ENCODE measurements at regions of chr11 and their contacts with region 1.

Region 1: GRCh38 chr11:62787005-62787759 is at the start of gene TMEM179B:
- DNase-seq: peak; percentile 98
- H3K4me3 ChIP-seq: peak within 1 kb of the TSS; percentile 60
- H3K27ac ChIP-seq: peak within 1 kb of the TSS; percentile 74
- H3K4me1 ChIP-seq: peaks cover 32% of the 10 kb centered on the region
- H3K27me3 ChIP-seq: no peaks in the 10 kb centered on the region
- CTCF ChIP-seq: peak; percentile 29
- total RNA-seq, gene TMEM179B: 45.5 and 48.3 TPM in 2 replicates

Region 2: GRCh38 chr11:62461740-62462507 is 325.3 kb before region 1 on chr11:
- CTCF ChIA-PET with region 1: no interaction called
- POLR2A ChIA-PET with region 1: interaction called, 30 read pairs
- intact Hi-C with region 1: no loop called
- DNase-seq: no peak
- H3K4me3 ChIP-seq: no peak overlapping the region
- H3K27ac ChIP-seq: no peak overlapping the region
- H3K4me1 ChIP-seq: peaks cover 22% of the 10 kb centered on the region
- H3K27me3 ChIP-seq: no peaks in the 10 kb centered on the region
- CTCF ChIP-seq: no peak

Region 3: DNA sequence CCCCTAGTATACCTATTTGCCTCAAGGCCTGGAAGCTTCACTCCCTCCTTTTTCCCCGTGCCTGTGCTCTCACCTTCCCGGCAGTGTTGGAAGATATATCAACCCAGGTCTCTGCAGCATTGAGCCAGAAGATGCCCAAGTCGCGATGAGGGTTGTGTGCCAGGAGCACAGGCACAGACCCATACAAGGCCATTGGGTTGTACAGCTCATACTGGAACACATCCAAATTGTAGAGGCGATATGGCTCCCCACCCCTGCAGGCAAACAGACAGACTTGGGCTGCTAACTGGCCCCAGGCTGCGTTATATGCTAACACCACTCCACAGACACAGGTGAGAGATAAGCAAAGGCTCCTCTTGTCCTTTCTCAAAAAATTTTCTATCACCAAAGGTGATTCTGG is 154.7 kb before region 1 on chr11:
- CTCF ChIA-PET with region 1: no interaction called
- POLR2A ChIA-PET with region 1: interaction called, 12 read pairs
- intact Hi-C with region 1: no loop called
- DNase-seq: no peak
- H3K4me3 ChIP-seq: no peak overlapping the region
- H3K27ac ChIP-seq: no peak overlapping the region
- H3K4me1 ChIP-seq: no peaks in the 10 kb centered on the region
- H3K27me3 ChIP-seq: no peaks in the 10 kb centered on the region
- CTCF ChIP-seq: no peak

Region 4: DNA sequence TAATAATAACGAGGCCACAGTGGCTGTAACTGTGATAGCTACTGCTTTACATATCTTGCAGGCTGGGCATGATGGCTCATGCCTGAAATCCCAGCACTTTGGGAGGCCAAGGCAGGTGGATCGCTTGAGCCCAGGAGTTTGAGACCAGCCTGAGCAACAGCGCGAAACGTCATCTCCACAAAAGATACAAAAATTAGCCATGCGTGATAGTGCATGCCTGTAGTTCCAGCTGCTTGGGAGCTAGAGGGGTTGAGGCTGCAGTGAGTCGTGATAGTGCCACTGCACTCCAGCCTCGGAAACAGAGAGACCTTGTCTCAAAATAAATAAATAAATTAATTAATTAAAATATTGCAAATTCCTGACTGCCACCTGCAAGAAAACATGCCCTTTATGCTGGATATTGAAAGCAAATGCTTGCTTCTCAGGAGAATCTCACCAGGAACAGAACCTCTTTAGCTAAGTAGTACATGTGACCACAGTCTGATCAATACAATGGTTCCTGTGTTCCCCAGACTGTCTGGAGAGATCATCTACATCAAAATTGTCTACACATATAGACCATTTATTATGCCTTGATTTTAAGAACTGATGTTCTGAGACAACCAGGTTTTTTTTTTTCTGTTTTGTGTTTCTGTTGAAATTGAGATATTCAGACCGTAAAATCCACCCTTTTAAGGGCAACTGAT is 39.6 kb before region 1 on chr11:
- CTCF ChIA-PET with region 1: no interaction called
- POLR2A ChIA-PET with region 1: no interaction called
- intact Hi-C with region 1: no loop called
- DNase-seq: no peak
- H3K4me3 ChIP-seq: no peak overlapping the region
- H3K27ac ChIP-seq: peak overlapping the region; percentile 38
- H3K4me1 ChIP-seq: peaks cover 3% of the 10 kb centered on the region; the same call in 1 of the 2 replicates
- H3K27me3 ChIP-seq: no peaks in the 10 kb centered on the region
- CTCF ChIP-seq: no peak

Region 5: GRCh38 chr11:62805076-62805892 is 18.1 kb after region 1 on chr11 and contains the start of gene NXF1:
- CTCF ChIA-PET with region 1: no interaction called
- POLR2A ChIA-PET with region 1: no interaction called
- intact Hi-C with region 1: loop called (anchors 2 kb)
- DNase-seq: peak; percentile 87 to 98
- H3K4me3 ChIP-seq: peak within 1 kb of the TSS; percentile 94
- H3K27ac ChIP-seq: peak within 1 kb of the TSS; percentile 16
- H3K4me1 ChIP-seq: peaks cover 20% of the 10 kb centered on the region
- H3K27me3 ChIP-seq: no peaks in the 10 kb centered on the region
- CTCF ChIP-seq: no peak
- total RNA-seq, gene NXF1: 45.6 and 56.1 TPM in 2 replicates

Region 6: DNA sequence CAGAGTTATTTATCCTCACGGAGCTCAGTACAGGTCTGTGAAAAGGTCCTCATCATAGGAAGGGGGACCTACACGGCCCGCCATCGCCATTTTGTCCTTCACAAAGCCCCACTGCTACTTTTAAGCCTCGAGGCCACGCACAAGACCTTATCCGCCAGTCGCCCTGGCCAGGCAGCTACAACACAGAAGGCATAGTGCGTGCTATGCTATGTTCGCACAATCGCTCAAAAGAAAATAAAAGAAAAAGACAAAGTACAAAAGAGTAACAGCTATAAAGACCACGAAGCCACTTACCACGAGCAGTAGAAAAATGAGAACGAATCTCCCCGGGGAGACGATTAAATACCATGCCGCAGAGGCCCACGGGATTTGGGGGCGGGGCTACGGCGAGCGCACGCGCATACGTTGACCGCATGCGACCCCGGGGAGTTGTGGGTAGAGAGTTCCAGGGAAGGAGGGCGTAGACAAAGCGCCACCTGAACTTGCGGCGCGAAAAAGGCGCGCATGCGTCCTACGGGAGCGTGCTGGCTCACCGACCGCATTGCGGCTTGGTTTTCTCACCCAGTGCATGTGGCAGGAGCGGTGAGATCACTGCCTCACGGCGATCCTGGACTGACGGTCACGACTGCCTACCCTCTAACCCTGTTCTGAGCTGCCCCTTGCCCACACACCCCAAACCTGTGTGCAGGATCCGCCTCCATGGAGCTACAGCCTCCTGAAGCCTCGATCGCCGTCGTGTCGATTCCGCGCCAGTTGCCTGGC is 68.6 kb after region 1 on chr11:
- CTCF ChIA-PET with region 1: interaction called, 18 read pairs
- POLR2A ChIA-PET with region 1: interaction called, 5 read pairs
- intact Hi-C with region 1: no loop called
- DNase-seq: peak; percentile 98 to 99
- H3K4me3 ChIP-seq: peak overlapping the region; percentile 97
- H3K27ac ChIP-seq: peak overlapping the region; percentile 85
- H3K4me1 ChIP-seq: peaks cover 37% of the 10 kb centered on the region
- H3K27me3 ChIP-seq: no peaks in the 10 kb centered on the region
- CTCF ChIP-seq: no peak

Region 7: DNA sequence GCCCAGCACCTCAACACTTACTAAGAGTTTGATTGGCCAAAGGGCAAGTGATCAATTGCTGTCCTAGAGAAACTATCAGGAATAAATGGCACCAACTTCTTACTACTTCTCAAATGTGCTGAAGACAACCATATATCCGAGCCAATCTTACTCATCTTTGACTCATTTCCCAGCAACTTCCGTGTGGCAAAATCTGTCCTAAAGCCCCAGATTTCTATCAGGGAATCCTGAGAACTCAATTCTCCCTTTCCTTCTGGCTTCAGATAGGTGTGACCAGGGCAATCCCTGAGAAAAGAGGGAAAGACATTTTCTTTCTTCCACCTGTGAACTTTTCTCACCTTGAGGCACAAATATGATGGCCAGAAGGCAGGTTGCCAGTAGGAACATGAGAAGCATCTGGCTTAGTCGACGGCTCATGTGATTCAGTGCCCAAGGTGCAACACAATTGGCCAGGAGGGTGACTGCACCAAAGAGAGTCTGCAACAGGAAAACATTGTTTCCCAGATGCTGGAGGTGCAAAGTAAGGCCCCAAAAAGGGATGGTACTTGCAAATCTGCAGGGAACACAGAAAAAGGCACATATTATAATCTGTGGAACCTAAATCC is 378.6 kb after region 1 on chr11:
- CTCF ChIA-PET with region 1: no interaction called
- POLR2A ChIA-PET with region 1: no interaction called
- intact Hi-C with region 1: no loop called
- DNase-seq: no peak
- H3K4me3 ChIP-seq: no peak overlapping the region
- H3K27ac ChIP-seq: no peak overlapping the region
- H3K4me1 ChIP-seq: no peaks in the 10 kb centered on the region
- H3K27me3 ChIP-seq: peaks cover 21% of the 10 kb centered on the region; the same call in 1 of the 2 replicates
- CTCF ChIP-seq: no peak